OCI-LY7 (cell line): ENCODE measurements at regions of chr2 and their contacts with region 1.

Region 1: DNA sequence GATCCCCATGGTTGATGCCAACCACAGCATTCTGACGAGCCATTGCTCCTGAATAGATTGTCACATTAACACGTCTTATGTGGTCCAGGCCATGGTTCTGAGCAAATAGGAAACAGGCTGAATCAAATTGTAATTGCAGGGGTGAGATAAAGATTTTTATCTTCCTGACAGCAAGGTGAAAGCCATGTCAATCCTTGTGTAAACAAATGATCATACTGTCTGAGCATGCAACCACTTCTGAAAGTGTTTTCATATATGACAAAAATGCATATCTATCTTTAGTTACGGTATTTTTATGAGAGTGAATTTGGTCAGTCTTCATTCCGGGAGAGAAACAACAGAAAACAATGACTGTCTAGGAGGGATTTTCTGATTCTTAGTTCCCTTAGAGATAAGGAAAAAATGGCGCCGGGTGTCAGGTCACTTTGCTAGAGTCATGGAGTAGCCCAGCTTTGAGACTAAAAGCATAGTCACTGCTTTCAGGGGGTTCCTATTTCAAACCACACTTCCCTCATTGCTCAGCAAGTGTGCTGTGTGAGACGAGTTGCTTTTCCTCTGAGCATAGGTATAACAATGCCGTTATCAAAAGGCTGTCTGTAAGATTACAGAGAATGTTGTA is 958.9 kb downstream of the DCDC2C start:
- DNase-seq: no peak
- H3K4me3 ChIP-seq: no peak overlapping the region
- H3K27ac ChIP-seq: no peak overlapping the region
- H3K4me1 ChIP-seq: peaks cover 9% of the 10 kb centered on the region
- CTCF ChIP-seq: no peak

Region 2: DNA sequence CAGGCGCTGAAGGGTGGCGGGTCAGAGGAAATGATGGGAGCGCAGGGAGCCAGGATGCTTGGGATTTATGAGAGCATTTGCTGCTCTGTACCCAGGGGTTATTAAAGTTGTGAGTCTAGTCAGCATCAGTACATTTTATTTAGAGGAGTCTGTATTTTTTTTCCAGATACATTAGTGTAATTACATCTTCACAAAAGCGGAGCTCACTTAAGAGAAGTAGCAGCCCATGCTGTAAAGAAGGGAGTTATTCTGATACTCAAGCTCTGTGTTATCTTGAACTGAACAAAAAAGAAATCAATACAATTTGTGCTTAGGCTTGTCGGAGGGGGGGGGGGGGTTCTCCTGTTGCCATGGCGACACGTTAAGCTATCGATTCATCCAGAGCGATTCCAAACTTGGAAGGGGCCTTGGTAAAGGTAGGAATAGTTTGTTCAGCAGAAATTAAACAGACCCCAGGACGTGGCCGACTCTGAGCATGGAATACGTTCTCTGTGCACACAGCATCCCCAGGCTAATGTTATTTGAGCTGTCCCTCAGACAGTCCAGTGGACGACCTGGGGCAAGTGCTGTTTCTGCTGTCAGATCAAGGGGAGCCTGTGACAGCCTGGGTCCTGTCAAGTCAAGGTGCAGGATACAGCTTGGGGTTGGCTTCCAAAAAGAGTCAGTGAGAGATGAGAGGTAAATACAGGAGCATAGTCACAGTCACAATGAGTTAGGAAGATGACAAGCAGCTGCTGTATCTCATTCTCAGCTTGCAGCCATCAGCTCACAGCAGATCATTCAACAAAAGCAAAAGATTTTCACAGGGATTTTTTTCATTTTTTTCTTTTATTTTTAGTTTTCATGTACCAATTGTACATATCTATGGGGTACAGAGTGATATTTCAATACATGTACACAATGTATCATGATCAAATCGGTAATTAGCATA is 571.3 kb before region 1 on chr2:
- CTCF ChIA-PET with region 1: interaction called, 11 read pairs
- POLR2A ChIA-PET with region 1: no interaction called
- intact Hi-C with region 1: no loop called
- DNase-seq: no peak
- H3K4me3 ChIP-seq: no peak overlapping the region
- H3K27ac ChIP-seq: no peak overlapping the region
- H3K4me1 ChIP-seq: no peaks in the 10 kb centered on the region
- CTCF ChIP-seq: no peak

Region 3: GRCh38 chr2:4882421-4882820 is 220.2 kb after region 1 on chr2:
- CTCF ChIA-PET with region 1: no interaction called
- POLR2A ChIA-PET with region 1: no interaction called
- intact Hi-C with region 1: no loop called
- DNase-seq: no peak
- H3K4me3 ChIP-seq: no peak overlapping the region
- H3K27ac ChIP-seq: no peak overlapping the region
- H3K4me1 ChIP-seq: no peaks in the 10 kb centered on the region
- CTCF ChIP-seq: no peak

Region 4: DNA sequence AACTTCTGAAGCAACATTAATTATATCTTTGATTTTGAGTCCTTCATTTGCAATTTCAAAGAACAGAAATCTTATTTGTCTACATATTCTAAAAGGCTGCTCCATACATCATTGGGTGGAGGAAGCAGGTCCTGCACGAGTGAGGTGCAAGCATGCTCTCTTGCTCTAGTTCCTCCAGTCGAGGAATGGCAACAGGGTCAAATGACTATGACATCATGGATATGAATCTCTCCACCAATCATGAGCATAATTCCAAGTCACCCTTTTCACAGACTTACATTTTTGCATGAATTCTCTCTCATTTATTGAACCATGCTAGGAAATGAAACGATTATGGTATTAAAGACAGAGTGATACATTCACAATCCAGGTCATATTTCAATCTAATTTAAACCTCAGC is 421.1 kb after region 1 on chr2:
- CTCF ChIA-PET with region 1: no interaction called
- POLR2A ChIA-PET with region 1: no interaction called
- intact Hi-C with region 1: no loop called
- DNase-seq: no peak
- H3K4me3 ChIP-seq: no peak overlapping the region
- H3K27ac ChIP-seq: no peak overlapping the region
- H3K4me1 ChIP-seq: no peaks in the 10 kb centered on the region
- CTCF ChIP-seq: no peak